ENCODE measurements at regions of chr7 and their contacts with region 1.

Region 1: DNA sequence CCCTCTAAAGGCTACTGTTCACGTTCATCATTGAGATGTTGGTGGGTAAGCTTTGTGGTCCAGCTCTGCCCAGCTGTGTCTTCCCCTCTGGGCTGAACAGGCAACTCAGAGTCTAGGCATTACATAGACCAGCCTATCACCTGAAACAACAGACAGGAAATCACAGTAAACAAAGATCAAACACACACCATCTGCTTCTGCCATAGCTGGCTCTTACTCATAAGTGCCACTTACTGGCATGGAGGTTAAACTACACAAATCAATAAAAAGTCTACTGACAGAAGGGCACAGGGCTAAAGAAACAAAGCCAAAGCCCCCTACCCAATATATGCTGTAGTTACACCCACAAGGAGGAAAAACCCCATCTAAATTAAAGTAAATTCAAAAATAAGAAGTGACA is 35.0 kb downstream of the SEPTIN14 start:
- DNase-seq: no peak
- ATAC-seq: no peak
- H3K4me3 ChIP-seq: no peak overlapping the region
- H3K27ac ChIP-seq: no peak overlapping the region
- H3K4me1 ChIP-seq: no peaks in the 10 kb centered on the region
- H3K27me3 ChIP-seq: no peaks in the 10 kb centered on the region
- CTCF ChIP-seq: no peak

Region 2: DNA sequence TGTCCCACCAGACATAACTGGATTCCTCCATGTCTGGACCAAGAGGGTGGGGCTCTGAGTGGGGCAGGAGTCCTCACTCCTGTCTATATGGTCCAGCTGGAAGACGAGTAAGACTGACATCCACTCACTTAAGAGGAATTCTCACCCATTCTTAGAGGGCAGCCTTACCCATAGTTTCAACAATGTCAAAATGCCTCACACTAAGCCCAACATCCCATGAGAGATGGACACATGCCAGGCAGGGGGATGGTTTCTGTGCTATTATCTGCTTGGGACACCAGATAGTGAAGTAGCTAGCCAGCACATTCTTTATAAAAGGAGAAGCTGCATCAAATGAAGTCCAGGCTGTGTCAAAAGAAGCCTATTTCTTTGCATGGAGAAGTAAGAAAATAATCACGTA is 467.1 kb before region 1 on chr7:
- CTCF ChIA-PET with region 1: no interaction called
- POLR2A ChIA-PET with region 1: no interaction called
- in situ Hi-C with region 1: no loop called
- intact Hi-C with region 1: no loop called
- DNase-seq: no peak
- ATAC-seq: no peak
- H3K4me3 ChIP-seq: no peak overlapping the region
- H3K27ac ChIP-seq: no peak overlapping the region
- H3K4me1 ChIP-seq: peaks cover 15% of the 10 kb centered on the region
- H3K27me3 ChIP-seq: peaks cover 10% of the 10 kb centered on the region
- CTCF ChIP-seq: no peak

Region 3: DNA sequence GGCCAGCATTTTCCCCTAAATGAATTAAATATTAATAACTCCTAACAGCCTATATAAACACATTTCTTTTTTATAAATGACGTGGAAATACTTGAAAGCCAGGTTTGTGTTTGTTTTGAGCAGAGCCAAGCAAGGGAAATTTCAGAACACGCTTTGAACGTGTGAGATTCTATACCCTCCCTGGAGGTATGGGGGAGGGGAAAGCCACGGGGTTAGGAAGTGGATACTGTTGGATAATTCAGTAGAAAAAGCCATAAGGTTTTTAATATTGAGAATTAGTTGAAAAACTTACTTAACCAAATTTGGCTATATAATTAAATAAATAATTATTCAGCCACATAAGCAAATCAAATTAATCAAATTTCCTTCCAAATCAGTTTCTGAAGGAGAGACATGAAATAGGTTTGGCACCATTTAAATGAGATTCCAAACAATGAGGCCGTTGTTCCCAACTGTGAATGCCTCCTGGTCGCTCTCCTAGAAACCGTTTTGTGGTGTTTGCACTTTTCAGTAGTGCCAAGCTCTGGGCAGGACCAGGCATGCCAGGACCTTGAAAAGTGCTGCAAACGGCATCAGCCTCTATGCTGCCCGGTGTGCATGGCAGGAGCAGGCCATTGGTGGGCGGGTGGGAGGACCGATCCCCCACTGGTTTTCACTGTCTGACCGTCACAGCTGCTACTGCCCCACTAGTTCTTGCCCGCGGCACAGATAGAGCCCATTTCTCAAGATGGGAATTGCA is 53.1 kb before region 1 on chr7:
- CTCF ChIA-PET with region 1: no interaction called
- POLR2A ChIA-PET with region 1: interaction called, 3 read pairs
- in situ Hi-C with region 1: no loop called
- intact Hi-C with region 1: loop called (anchors 2 kb)
- DNase-seq: no peak
- ATAC-seq: peak; percentile 89
- H3K4me3 ChIP-seq: peak overlapping the region in 1 of 2 experiments; percentile 20; a peak in 2 of 4 replicates
- H3K27ac ChIP-seq: peak overlapping the region; percentile 78
- H3K4me1 ChIP-seq: peaks cover 23% of the 10 kb centered on the region
- H3K27me3 ChIP-seq: no peaks in the 10 kb centered on the region
- CTCF ChIP-seq: no peak

Region 4: GRCh38 chr7:55794527-55794926 is 33.0 kb before region 1 on chr7:
- CTCF ChIA-PET with region 1: no interaction called
- POLR2A ChIA-PET with region 1: no interaction called
- in situ Hi-C with region 1: no loop called
- intact Hi-C with region 1: no loop called
- DNase-seq: no peak
- ATAC-seq: peak; percentile 77; the same call in 1 of the 2 replicates
- H3K4me3 ChIP-seq: no peak overlapping the region
- H3K27ac ChIP-seq: no peak overlapping the region
- H3K4me1 ChIP-seq: no peaks in the 10 kb centered on the region
- H3K27me3 ChIP-seq: no peaks in the 10 kb centered on the region
- CTCF ChIP-seq: no peak

Region 5: DNA sequence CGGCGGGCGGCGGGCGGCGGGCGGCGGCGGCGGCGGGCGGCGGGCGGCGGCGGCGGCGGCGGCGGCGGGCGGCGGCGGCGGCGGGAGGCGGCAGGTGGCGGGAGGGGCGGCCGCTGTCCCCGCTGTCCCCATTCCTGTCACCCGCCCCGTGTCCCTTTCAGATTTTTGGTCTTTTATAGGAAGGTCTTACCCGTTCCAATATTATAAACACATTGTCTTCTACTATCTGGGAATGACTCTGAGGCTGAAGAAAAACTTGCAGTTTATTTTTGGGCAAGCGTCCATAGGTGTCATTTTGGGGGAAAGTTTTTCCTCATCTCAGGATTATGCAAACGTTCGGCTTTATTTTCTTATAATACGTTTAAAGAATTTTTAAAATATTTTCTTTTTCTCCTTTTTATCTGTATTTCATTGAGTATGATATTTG is 60.3 kb after region 1 on chr7:
- CTCF ChIA-PET with region 1: no interaction called
- POLR2A ChIA-PET with region 1: no interaction called
- in situ Hi-C with region 1: no loop called
- intact Hi-C with region 1: no loop called
- DNase-seq: no peak
- ATAC-seq: no peak
- H3K4me3 ChIP-seq: peak overlapping the region; percentile 55 to 61
- H3K27ac ChIP-seq: peak overlapping the region; percentile 84
- H3K4me1 ChIP-seq: 0 out of 2 replicates have a peak, but pooled peaks cover 3% of the 10 kb centered on the region
- H3K27me3 ChIP-seq: no peaks in the 10 kb centered on the region
- CTCF ChIP-seq: no peak

Region 6: GRCh38 chr7:56106108-56107073 is 278.8 kb after region 1 on chr7 and contains the start of gene CHCHD2:
- CTCF ChIA-PET with region 1: no interaction called
- POLR2A ChIA-PET with region 1: no interaction called
- in situ Hi-C with region 1: no loop called
- intact Hi-C with region 1: no loop called
- DNase-seq: peak; percentile 99
- ATAC-seq: peak; percentile 100
- H3K4me3 ChIP-seq: peak within 1 kb of the TSS; percentile 55 to 98
- H3K27ac ChIP-seq: peak within 1 kb of the TSS; percentile 98
- H3K4me1 ChIP-seq: peaks cover 6% of the 10 kb centered on the region; the same call in 1 of the 2 replicates
- H3K27me3 ChIP-seq: no peaks in the 10 kb centered on the region
- CTCF ChIP-seq: no peak
- total RNA-seq, gene CHCHD2: 666 TPM